Activated naive CD4-positive, alpha-beta T cell treated with anti-CD3 and anti-CD28 coated beads for 36 hours (primary cell): ENCODE measurements at regions of chr15 and their contacts with region 1.

Region 1: DNA sequence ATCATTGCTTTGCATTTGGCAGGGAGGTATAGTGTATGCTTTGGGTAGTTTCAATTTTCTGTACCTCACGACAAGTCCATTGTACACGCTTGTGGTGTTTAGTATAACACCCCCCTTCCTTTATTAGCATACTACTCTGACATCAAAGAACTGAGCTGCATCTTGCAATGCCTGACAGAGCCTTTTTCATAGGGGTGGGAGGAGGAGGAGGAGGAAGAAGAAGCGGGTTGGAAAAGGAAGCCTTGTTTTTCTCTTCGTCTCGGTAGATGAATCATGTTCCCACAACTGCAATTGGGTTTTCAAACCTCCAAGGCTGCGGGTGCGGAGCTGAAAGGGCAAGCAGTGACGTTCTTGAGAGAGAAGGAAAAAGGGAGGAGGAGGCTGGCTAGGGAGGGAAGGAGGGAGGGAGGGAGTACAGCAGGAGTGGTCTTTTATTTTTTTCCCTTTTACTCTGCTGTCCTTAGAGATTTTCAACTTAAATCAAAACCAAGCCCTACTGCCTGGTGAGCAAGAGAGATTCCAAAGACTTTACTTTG is 175.7 kb downstream of the KLHL25 start:
- DNase-seq: peak; percentile 78
- H3K4me3 Mint-ChIP-seq: no peak overlapping the region
- H3K27ac Mint-ChIP-seq: no peak overlapping the region
- H3K4me1 Mint-ChIP-seq: peaks cover 30% of the 10 kb centered on the region
- H3K27me3 Mint-ChIP-seq: no peaks in the 10 kb centered on the region

Region 2: DNA sequence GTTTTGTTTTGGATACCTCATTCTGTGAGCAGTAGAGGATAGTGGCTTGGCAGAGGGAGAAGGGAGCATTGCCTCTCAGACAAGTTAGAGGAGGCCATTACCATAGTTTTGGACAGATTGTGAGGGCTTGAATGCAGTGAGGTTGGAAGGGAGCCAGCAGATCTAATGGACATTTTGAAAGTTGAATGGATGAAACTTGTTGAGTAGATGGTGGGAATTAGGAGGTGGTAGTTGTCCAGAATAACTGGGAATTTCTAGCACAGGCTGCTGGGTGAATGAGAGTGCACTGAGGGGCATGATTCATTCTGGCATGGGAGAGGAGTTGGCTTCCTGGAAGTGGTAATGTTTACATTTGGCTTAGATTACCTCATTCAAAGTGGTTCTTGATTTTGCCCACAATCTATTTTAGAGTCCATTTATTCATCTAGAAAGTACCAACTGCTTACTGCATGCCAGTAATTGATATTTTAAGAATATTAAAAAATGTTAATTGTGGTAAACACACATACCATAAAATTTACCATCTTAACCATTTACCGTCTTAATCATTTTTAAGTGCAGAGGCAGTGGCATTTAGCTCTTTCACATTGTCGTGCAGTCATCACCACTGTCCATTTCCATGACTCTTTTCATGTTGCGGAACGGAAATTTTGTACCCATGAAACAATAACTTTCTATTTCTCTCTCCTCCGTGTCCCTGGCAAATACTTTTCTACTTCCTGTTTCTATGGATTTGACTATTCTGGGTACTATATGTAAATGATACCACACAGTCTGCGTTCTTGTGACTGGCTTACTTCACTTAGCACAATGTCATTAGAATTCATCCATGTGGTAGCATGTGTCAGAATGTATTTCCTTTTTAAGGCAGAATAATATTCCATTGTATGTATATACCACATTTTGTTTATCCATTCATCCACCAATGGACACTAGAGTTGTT is 210.9 kb before region 1 on chr15:
- CTCF ChIA-PET with region 1: no interaction called
- intact Hi-C with region 1: loop called (anchors 5 kb)
- DNase-seq: peak; percentile 67
- H3K4me3 Mint-ChIP-seq: peak overlapping the region; percentile 58
- H3K27ac Mint-ChIP-seq: peak overlapping the region; percentile 88
- H3K4me1 Mint-ChIP-seq: peaks cover 86% of the 10 kb centered on the region
- H3K27me3 Mint-ChIP-seq: no peaks in the 10 kb centered on the region

Region 3: GRCh38 chr15:85597155-85597815 is 21.7 kb before region 1 on chr15:
- CTCF ChIA-PET with region 1: interaction called, 3 read pairs
- intact Hi-C with region 1: loop called (anchors 1 kb)
- DNase-seq: peak; percentile 55
- H3K4me3 Mint-ChIP-seq: no peak overlapping the region
- H3K27ac Mint-ChIP-seq: no peak overlapping the region
- H3K4me1 Mint-ChIP-seq: peaks cover 37% of the 10 kb centered on the region
- H3K27me3 Mint-ChIP-seq: no peaks in the 10 kb centered on the region

Region 4: GRCh38 chr15:85689729-85690128 is 70.7 kb after region 1 on chr15:
- CTCF ChIA-PET with region 1: interaction called, 3 read pairs
- intact Hi-C with region 1: loop called (anchors 1 kb)
- DNase-seq: peak; percentile 76
- H3K4me3 Mint-ChIP-seq: peak overlapping the region; percentile 84
- H3K27ac Mint-ChIP-seq: peak overlapping the region; percentile 99
- H3K4me1 Mint-ChIP-seq: peaks cover 78% of the 10 kb centered on the region
- H3K27me3 Mint-ChIP-seq: no peaks in the 10 kb centered on the region

Region 5: GRCh38 chr15:85723960-85724945 is 105.2 kb after region 1 on chr15:
- CTCF ChIA-PET with region 1: interaction called, 3 read pairs
- intact Hi-C with region 1: loop called (anchors 1 kb)
- DNase-seq: peak; percentile 41
- H3K4me3 Mint-ChIP-seq: peak overlapping the region; percentile 43
- H3K27ac Mint-ChIP-seq: peak overlapping the region; percentile 97
- H3K4me1 Mint-ChIP-seq: peaks cover 67% of the 10 kb centered on the region
- H3K27me3 Mint-ChIP-seq: no peaks in the 10 kb centered on the region

Region 6: GRCh38 chr15:85840065-85840801 is 221.2 kb after region 1 on chr15:
- CTCF ChIA-PET with region 1: interaction called, 5 read pairs
- intact Hi-C with region 1: loop called (anchors 2 kb)
- DNase-seq: peak; percentile 81
- H3K4me3 Mint-ChIP-seq: peak overlapping the region; percentile 65
- H3K27ac Mint-ChIP-seq: no peak overlapping the region
- H3K4me1 Mint-ChIP-seq: no peaks in the 10 kb centered on the region
- H3K27me3 Mint-ChIP-seq: peaks cover 3% of the 10 kb centered on the region

Region 7: GRCh38 chr15:85955501-85956391 is 336.7 kb after region 1 on chr15:
- CTCF ChIA-PET with region 1: no interaction called
- intact Hi-C with region 1: no loop called
- DNase-seq: no peak
- H3K4me3 Mint-ChIP-seq: no peak overlapping the region
- H3K27ac Mint-ChIP-seq: peak overlapping the region; percentile 22
- H3K4me1 Mint-ChIP-seq: peaks cover 14% of the 10 kb centered on the region
- H3K27me3 Mint-ChIP-seq: peaks cover 2% of the 10 kb centered on the region

Region 8: DNA sequence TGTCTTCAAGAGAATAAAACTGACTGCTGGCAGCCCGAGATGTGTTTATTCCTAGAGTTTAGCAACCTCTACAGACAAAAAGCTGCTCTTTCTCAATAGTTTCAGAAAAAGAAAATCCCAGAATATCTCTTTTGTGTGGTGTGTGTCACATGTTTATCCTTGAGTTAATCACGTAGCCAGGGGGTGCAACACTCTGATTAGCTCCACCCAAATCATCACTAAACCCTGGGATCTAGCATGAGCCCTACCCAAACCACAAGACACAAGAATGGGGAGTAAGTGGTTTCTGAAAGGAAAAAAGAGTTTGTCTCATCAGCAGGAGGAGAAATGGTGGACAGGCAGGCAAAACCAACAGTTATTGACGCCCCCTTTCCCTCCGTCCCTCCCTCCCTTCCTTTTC is 382.2 kb after region 1 on chr15:
- CTCF ChIA-PET with region 1: no interaction called
- intact Hi-C with region 1: no loop called
- DNase-seq: no peak
- H3K4me3 Mint-ChIP-seq: no peak overlapping the region
- H3K27ac Mint-ChIP-seq: no peak overlapping the region
- H3K4me1 Mint-ChIP-seq: no peaks in the 10 kb centered on the region
- H3K27me3 Mint-ChIP-seq: peaks cover 6% of the 10 kb centered on the region